Activated naive CD4-positive, alpha-beta T cell treated with anti-CD3 and anti-CD28 coated beads for 36 hours (primary cell): ENCODE measurements at regions of chr15 and their contacts with region 1.

Region 1: GRCh38 chr15:40593588-40594428 is at the start of gene KNL1:
- DNase-seq: peak; percentile 95
- H3K4me3 Mint-ChIP-seq: peak within 1 kb of the TSS; percentile 97
- H3K27ac Mint-ChIP-seq: peak within 1 kb of the TSS; percentile 99
- H3K4me1 Mint-ChIP-seq: peaks cover 23% of the 10 kb centered on the region
- H3K27me3 Mint-ChIP-seq: peaks cover 5% of the 10 kb centered on the region
- total RNA-seq, gene KNL1: 31.0 to 32.7 TPM

Region 2: GRCh38 chr15:40115670-40116093 is 478.1 kb before region 1 on chr15:
- CTCF ChIA-PET with region 1: no interaction called
- intact Hi-C with region 1: no loop called
- DNase-seq: peak; percentile 78
- H3K4me3 Mint-ChIP-seq: no peak overlapping the region
- H3K27ac Mint-ChIP-seq: peak overlapping the region; percentile 11
- H3K4me1 Mint-ChIP-seq: peaks cover 11% of the 10 kb centered on the region
- H3K27me3 Mint-ChIP-seq: no peaks in the 10 kb centered on the region

Region 3: DNA sequence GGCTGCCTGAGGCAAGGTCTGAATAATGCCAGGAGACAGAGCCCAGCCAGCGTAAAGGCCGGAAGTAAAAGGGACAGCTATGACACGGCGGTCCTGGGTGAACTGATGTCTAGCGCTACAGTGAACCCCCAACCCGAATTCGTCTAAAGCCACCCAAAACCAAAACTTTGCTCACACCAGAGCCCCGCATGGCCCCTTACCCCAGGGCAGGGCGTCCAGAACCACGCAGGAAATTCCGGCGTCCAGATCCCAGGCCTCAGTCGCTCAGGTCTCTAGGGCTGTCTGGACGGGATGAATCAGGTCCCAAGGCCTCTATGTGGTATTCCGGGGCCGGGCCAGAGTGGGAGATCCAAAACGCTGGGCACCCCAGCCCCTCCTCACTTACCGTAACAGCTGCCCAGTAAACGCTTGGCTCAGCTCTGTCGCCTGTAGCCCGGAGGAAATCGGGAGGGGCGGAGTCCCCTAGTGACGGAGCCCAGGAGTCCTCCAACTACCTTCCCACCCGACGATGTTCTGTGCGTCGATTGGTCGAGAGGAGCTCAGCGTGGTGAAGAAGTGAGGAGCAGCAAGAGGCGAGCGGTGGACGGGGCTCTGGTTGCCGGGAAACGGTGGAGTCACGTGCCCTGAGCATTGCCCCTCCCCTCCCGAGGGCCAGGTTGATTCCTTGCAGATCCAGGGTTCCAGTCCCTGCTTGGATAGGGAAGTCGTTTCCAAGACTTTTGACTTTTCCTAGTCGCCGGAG is 29.0 kb before region 1 on chr15 and contains the start of gene CCDC32:
- CTCF ChIA-PET with region 1: interaction called, 7 read pairs
- intact Hi-C with region 1: loop called (anchors 1 kb)
- DNase-seq: peak; percentile 98
- H3K4me3 Mint-ChIP-seq: peak within 1 kb of the TSS; percentile 96
- H3K27ac Mint-ChIP-seq: peak within 1 kb of the TSS; percentile 90
- H3K4me1 Mint-ChIP-seq: peaks cover 45% of the 10 kb centered on the region
- H3K27me3 Mint-ChIP-seq: no peaks in the 10 kb centered on the region
- total RNA-seq, gene CCDC32: 25.4 to 25.8 TPM

Region 4: GRCh38 chr15:40754883-40755811 is 161.3 kb after region 1 on chr15 and contains the start of gene RMDN3:
- CTCF ChIA-PET with region 1: no interaction called
- intact Hi-C with region 1: loop called (anchors 1 kb)
- DNase-seq: peak; percentile 95
- H3K4me3 Mint-ChIP-seq: peak within 1 kb of the TSS; percentile 94
- H3K27ac Mint-ChIP-seq: peak within 1 kb of the TSS; percentile 98
- H3K4me1 Mint-ChIP-seq: peaks cover 25% of the 10 kb centered on the region
- H3K27me3 Mint-ChIP-seq: no peaks in the 10 kb centered on the region
- total RNA-seq, gene RMDN3: 17.8 to 19.2 TPM

Region 5: DNA sequence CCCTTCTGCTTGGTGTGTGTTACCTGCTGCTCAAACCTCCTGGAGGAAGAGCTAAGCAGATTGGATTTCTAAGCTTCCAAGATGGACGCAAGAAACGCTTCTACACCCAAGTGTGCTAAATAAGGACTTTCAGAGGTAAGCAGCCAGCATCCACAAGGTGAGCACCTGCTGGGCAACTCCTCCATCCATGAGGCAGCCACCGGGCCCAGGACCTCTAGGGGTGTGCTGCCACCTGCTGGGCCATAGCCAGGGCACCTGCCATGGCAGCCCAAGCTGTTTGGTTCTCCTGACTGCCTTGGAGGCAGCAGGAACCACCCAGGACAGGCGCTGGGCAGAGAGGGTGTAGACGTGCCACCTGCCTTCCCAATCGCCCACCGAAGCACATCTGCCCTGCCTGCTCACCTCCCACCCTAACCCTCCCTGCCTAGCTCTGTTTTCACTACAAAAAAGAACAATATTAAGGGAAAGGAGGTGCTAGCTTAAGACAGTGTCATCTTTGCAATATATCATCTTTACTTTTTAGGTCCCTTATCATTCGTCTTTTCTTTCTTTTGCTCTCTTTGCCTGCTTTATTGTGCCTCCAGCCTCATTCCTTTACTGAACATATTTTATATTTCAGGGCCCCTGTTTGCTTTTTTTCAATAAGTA is 188.9 kb after region 1 on chr15:
- CTCF ChIA-PET with region 1: interaction called, 7 read pairs
- intact Hi-C with region 1: loop called (anchors 1 kb)
- DNase-seq: peak; percentile 88
- H3K4me3 Mint-ChIP-seq: no peak overlapping the region
- H3K27ac Mint-ChIP-seq: no peak overlapping the region
- H3K4me1 Mint-ChIP-seq: peaks cover 18% of the 10 kb centered on the region
- H3K27me3 Mint-ChIP-seq: no peaks in the 10 kb centered on the region

Region 6: GRCh38 chr15:41116116-41116871 is 522.5 kb after region 1 on chr15 and contains the start of gene INO80:
- CTCF ChIA-PET with region 1: no interaction called
- intact Hi-C with region 1: loop called (anchors 1 kb)
- DNase-seq: peak; percentile 99
- H3K4me3 Mint-ChIP-seq: peak within 1 kb of the TSS; percentile 88
- H3K27ac Mint-ChIP-seq: peak within 1 kb of the TSS; percentile 96
- H3K4me1 Mint-ChIP-seq: peaks cover 21% of the 10 kb centered on the region
- H3K27me3 Mint-ChIP-seq: no peaks in the 10 kb centered on the region
- total RNA-seq, gene INO80: 14.0 to 16.8 TPM